Activated CD4-positive, alpha-beta T cell treated with anti-CD3 and anti-CD28 coated beads, Interleukin-2, amount 10 ng/mL, durations not matched to agents 24 days and 14 days (primary cell): ENCODE measurements at regions of chr12 and their contacts with region 1.

Region 1: DNA sequence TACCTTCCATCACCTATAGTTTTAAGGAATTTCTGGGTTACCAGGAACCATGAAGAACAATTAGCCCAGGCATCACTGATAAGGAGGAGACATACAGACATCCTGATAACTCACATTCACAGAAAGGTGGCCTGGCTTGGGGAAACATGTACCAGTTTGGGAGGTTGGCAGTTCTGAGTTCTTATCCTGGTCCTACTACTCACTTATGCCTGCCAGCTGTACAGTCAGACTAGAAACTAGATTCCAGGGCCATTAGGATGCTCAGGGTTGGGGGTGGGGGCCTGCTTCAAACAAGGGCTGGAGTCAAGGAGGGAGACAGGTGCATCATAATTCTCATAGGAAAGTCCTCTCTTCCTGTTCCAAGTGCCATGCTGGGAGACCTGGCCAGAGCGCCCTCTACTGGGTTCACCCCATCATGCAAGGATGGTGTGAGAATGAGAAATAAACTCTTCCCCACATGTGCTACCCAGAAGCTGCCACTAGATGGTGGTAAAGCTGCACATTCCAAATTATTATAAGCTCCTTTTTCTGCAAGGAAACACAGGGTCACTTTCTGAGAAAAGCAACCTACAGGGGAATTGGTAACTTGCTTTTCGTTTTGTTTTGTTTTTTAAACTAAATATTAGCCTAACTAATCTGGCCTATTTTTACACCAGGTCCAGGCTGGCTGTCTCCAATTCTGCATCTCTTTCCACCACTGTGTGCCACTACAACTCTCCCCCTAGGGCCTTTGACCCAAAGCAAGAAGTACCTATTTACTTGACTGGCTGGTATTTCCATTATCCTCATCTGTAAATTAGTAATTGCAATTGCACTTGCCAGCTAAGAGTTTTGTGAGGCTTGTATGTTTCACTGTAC is 14.5 kb downstream of the OAS2 start:
- DNase-seq: peak; percentile 88
- H3K4me3 Mint-ChIP-seq: no peak overlapping the region
- H3K27ac Mint-ChIP-seq: peak overlapping the region; percentile 51
- H3K4me1 Mint-ChIP-seq: peaks cover 41% of the 10 kb centered on the region
- H3K27me3 Mint-ChIP-seq: no peaks in the 10 kb centered on the region

Region 2: GRCh38 chr12:112749081-112749480 is 243.7 kb before region 1 on chr12:
- intact Hi-C with region 1: no loop called
- DNase-seq: no peak
- H3K4me3 Mint-ChIP-seq: no peak overlapping the region
- H3K27ac Mint-ChIP-seq: no peak overlapping the region
- H3K4me1 Mint-ChIP-seq: no peaks in the 10 kb centered on the region
- H3K27me3 Mint-ChIP-seq: peaks cover 7% of the 10 kb centered on the region

Region 3: GRCh38 chr12:113030875-113031525 is 38.2 kb after region 1 on chr12:
- intact Hi-C with region 1: loop called (anchors 5 kb)
- DNase-seq: no peak
- H3K4me3 Mint-ChIP-seq: no peak overlapping the region
- H3K27ac Mint-ChIP-seq: no peak overlapping the region
- H3K4me1 Mint-ChIP-seq: peaks cover 4% of the 10 kb centered on the region
- H3K27me3 Mint-ChIP-seq: peaks cover 17% of the 10 kb centered on the region

Region 4: DNA sequence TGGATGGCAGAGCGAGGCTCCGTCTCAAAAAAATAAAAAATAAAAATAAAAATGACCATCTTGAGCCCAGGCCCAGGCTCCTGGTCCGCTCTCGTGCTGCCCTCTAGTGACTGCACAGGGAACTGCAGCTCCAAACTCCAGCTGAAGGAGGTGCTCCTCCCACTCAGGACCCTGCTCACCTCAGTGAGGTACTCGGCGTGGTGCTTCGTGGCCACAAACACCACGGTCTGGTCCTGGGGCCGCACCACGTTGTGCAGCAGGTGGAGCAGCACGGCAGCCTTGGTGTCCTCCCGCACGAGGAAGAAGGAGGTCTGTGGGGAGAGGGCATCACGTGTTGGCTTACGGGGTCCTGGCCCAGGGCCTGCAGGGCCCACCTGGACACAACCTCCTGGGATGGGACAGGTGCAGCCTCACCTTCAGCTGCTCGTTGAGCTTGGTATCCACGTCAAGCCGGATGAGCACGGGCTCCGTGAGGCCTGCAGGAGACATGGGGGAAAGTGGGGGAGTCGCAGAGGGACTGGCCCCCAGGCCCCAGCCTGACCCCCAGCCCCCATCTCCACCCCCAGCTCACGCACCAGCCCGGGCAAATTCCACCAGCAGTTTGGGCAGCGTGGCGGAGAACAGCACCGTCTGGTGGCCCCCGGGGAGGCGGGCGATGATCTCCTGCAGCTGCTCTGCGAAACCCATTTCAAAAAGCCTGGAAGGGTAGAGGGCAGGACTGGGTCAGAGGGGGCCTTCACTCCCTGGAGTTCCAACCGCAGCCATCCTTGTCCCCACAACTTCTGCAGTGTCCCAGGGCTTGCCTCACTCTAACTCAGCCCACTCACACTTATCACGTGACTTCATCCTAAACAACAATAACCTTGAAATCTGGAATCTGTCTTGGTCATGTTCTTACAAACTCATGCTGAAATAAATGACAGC is 182.0 kb after region 1 on chr12:
- intact Hi-C with region 1: no loop called
- DNase-seq: peak; percentile 93
- H3K4me3 Mint-ChIP-seq: no peak overlapping the region
- H3K27ac Mint-ChIP-seq: no peak overlapping the region
- H3K4me1 Mint-ChIP-seq: peaks cover 2% of the 10 kb centered on the region
- H3K27me3 Mint-ChIP-seq: no peaks in the 10 kb centered on the region